Activated CD4-positive, alpha-beta T cell treated with anti-CD3 and anti-CD28 coated beads, Interleukin-2, amount 10 ng/mL, durations not matched to agents 24 days and 14 days (primary cell): ENCODE measurements at regions of chr10 and their contacts with region 1.

Region 1: GRCh38 chr10:78302989-78303854 is 269.6 kb downstream of the RPS24 start:
- DNase-seq: peak; percentile 97
- H3K4me3 Mint-ChIP-seq: peak overlapping the region; percentile 93
- H3K27ac Mint-ChIP-seq: peak overlapping the region; percentile 96
- H3K4me1 Mint-ChIP-seq: peaks cover 14% of the 10 kb centered on the region
- H3K27me3 Mint-ChIP-seq: peaks cover 23% of the 10 kb centered on the region

Region 2: GRCh38 chr10:77355844-77356243 is 947.4 kb before region 1 on chr10:
- intact Hi-C with region 1: no loop called
- DNase-seq: no peak
- H3K4me3 Mint-ChIP-seq: no peak overlapping the region
- H3K27ac Mint-ChIP-seq: no peak overlapping the region
- H3K4me1 Mint-ChIP-seq: no peaks in the 10 kb centered on the region
- H3K27me3 Mint-ChIP-seq: no peaks in the 10 kb centered on the region

Region 3: DNA sequence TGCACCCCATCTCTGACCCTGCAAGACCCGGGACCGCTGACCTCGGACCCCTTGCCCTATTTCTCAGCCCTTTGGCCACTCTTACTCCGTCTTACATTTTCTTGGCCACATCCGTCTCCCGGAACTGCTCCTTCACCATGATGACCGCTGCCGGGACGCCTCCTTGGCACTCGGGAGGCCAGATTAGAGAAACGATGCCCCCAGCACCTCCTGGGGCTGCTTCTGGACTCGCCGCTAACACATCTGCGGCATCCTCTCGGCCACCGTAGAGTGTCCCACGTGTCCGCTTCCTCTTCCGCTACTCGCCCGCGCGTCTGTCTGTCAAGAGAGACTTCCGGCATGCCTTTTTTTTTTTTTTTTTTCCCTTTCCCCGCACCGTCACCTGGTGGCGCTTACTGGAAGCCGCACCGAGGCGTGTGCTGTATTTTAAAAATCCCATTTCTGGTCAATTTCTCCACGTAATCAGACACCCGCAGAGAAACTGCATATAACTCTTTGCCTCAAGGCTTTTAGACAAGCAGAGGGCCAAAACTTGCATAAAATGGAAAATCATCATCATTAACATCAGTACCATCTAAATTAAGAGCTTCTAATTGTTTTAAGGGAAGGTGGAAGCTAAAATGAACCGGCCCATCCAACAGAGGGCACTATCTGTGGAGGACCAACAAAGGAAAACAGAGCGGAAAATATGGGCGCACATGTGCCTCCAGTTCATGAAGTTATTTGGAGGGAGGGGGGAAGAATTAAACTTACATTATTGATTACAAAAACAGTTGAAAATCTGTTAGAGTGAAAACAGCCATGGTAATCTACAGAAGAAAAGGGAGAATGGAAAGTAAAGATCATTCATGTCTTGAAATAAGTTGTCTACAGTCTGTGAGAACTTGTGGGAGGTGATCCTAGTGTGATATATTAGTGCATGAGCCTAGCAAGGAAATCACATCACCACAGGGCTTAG is 273.7 kb before region 1 on chr10 and contains the start of gene POLR3A:
- intact Hi-C with region 1: loop called (anchors 1 kb)
- DNase-seq: peak; percentile 97
- H3K4me3 Mint-ChIP-seq: peak within 1 kb of the TSS; percentile 99
- H3K27ac Mint-ChIP-seq: peak within 1 kb of the TSS; percentile 95
- H3K4me1 Mint-ChIP-seq: peaks cover 24% of the 10 kb centered on the region
- H3K27me3 Mint-ChIP-seq: no peaks in the 10 kb centered on the region
- total RNA-seq, gene POLR3A: 27.8 and 28.7 TPM in 2 replicates

Region 4: GRCh38 chr10:78047314-78047891 is 255.8 kb before region 1 on chr10:
- intact Hi-C with region 1: loop called (anchors 5 kb)
- DNase-seq: peak; percentile 95
- H3K4me3 Mint-ChIP-seq: no peak overlapping the region
- H3K27ac Mint-ChIP-seq: no peak overlapping the region
- H3K4me1 Mint-ChIP-seq: peaks cover 21% of the 10 kb centered on the region
- H3K27me3 Mint-ChIP-seq: no peaks in the 10 kb centered on the region

Region 5: GRCh38 chr10:78657163-78657861 is 354.1 kb after region 1 on chr10:
- intact Hi-C with region 1: loop called (anchors 1 kb)
- DNase-seq: peak; percentile 91
- H3K4me3 Mint-ChIP-seq: no peak overlapping the region
- H3K27ac Mint-ChIP-seq: no peak overlapping the region
- H3K4me1 Mint-ChIP-seq: no peaks in the 10 kb centered on the region
- H3K27me3 Mint-ChIP-seq: peaks cover 4% of the 10 kb centered on the region